GM12878 (cell line): ENCODE measurements at regions of chr12 and their contacts with region 1.

Region 1: GRCh38 chr12:68290126-68290525 is 36.7 kb upstream of the IL22 start:
- DNase-seq: peak; percentile 93
- ATAC-seq: peak; percentile 100
- H3K4me3 ChIP-seq: no peak overlapping the region
- H3K27ac ChIP-seq: no peak overlapping the region
- H3K4me1 ChIP-seq: peaks cover 7% of the 10 kb centered on the region
- H3K27me3 ChIP-seq: no peaks in the 10 kb centered on the region
- CTCF ChIP-seq: no peak
- EP300 ChIP-seq: peak; percentile 94 to 96
- POLR2A ChIP-seq: no peak
- RAD21 ChIP-seq: no peak

Region 2: GRCh38 chr12:68279227-68280054 is 10.7 kb before region 1 on chr12:
- CTCF ChIA-PET with region 1: interaction called, 5 read pairs
- POLR2A ChIA-PET with region 1: interaction called, 3 read pairs
- RAD21 ChIA-PET with region 1: no interaction called
- SMC1A ChIA-PET with region 1: interaction called, 17 read pairs
- in situ Hi-C with region 1: no loop called
- intact Hi-C with region 1: loop called (anchors 2 kb)
- DNase-seq: no peak
- ATAC-seq: no peak
- H3K4me3 ChIP-seq: no peak overlapping the region
- H3K27ac ChIP-seq: no peak overlapping the region
- H3K4me1 ChIP-seq: peaks cover 9% of the 10 kb centered on the region; the same call in 1 of the 2 replicates
- H3K27me3 ChIP-seq: no peaks in the 10 kb centered on the region
- CTCF ChIP-seq: no peak
- EP300 ChIP-seq: no peak
- POLR2A ChIP-seq: no peak
- RAD21 ChIP-seq: no peak

Region 3: DNA sequence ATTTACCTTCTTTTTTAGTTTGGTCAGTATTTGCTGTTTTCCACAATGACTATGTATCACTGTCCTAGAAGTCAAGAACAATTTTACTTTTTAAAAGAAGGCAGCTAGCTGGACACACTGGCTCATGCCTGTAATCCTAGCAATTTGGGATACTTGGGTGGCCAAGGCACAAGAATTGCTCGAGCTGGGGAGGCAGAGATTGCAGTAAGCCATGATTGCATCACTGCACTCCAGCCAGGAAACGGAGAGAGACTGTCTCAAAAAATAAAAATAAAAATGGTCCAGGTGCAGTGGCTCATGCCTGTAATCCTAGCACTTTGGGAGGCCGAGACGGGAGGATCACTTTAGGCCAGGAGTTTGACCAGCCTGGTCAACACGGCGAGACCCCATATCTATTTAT is 13.7 kb after region 1 on chr12:
- CTCF ChIA-PET with region 1: interaction called, 5 read pairs
- POLR2A ChIA-PET with region 1: interaction called, 3 read pairs
- RAD21 ChIA-PET with region 1: interaction called, 6 read pairs
- SMC1A ChIA-PET with region 1: interaction called, 10 read pairs
- in situ Hi-C with region 1: no loop called
- intact Hi-C with region 1: loop called (anchors 1 kb)
- DNase-seq: no peak
- ATAC-seq: no peak
- H3K4me3 ChIP-seq: no peak overlapping the region
- H3K27ac ChIP-seq: no peak overlapping the region
- H3K4me1 ChIP-seq: peaks cover 8% of the 10 kb centered on the region
- H3K27me3 ChIP-seq: no peaks in the 10 kb centered on the region
- CTCF ChIP-seq: no peak
- EP300 ChIP-seq: no peak
- POLR2A ChIP-seq: no peak
- RAD21 ChIP-seq: no peak